Activated T-helper 1 cell treated with anti-CD3 and anti-CD28 coated beads, Interleukin-12 subunit alpha, Interleukin-12 subunit beta, Interleukin-2, Interleukin-4 antibody, amounts not matched to agents 30 ng/mL and 10 ng/mL and 1 ng/mL, durations not matched to agents 14 hours and 24 hours and 36 hours (primary cell): ENCODE measurements at regions of chr3 and their contacts with region 1.

Region 1: DNA sequence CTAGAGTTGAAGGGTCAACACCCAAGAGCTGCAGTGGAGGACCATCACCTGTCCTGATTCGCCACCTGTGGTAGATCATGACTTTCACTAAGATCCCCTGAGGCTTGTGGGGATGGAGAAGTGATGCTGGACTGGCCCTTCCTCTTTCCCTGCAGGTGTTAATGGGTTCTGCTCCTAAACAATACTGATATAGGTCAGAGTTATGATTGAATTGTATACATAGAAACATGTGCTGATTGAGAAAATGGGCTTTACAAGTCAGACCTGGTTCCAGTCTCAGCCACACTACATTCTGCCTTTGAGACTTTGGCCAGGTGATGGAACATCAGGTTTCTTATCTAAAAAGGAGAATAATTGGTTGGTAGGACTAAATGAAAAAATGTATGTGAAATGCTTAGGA is 418.9 kb upstream of the TPRG1 start:
- DNase-seq: no peak
- H3K4me3 Mint-ChIP-seq: no peak overlapping the region
- H3K27ac Mint-ChIP-seq: peak overlapping the region; percentile 60
- H3K4me1 Mint-ChIP-seq: peaks cover 33% of the 10 kb centered on the region
- H3K27me3 Mint-ChIP-seq: peaks cover 2% of the 10 kb centered on the region

Region 2: DNA sequence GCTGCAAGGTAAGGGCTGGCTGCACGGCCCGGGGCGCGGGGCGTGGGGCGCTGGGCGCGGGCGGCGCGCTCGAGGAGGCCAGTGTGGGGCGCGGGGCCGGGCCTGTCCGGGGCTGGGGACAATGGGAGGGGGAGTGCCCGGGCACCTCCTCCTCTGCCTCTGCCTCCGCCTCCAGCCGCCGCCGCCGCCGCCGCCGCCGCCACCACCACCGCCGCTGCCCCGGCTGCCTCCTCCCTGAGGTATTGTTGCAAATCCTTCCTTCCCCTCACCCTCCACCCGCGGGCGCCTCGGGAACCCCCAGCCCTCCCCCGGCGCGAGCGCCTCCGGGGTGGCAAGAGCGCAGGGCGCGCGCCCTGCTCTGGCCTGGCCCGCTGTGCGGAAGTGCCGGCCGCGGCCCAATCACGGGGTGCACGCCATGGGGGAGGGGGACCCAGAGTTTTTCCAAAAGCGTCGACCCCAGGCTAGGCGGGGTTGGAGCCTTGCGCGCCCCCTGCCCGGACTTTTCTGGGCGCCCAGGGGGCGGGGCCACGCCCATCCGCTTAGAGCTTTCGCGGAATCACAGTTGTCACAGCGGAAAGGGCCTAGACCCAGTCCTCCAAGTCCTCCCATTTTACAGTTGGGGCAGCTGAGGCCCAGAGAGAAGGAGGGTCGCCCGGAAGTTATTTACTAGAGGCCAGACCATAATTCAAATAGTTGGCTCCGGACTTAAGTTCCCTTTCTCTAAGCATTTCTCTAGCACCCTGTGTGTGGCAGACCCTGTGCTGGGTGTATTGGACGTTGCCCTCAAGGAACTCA is 598.6 kb before region 1 on chr3 and contains the start of gene LPP:
- intact Hi-C with region 1: loop called (anchors 2 kb)
- DNase-seq: peak; percentile 90
- H3K4me3 Mint-ChIP-seq: peak within 1 kb of the TSS; percentile 89
- H3K27ac Mint-ChIP-seq: peak within 1 kb of the TSS; percentile 87
- H3K4me1 Mint-ChIP-seq: peaks cover 71% of the 10 kb centered on the region
- H3K27me3 Mint-ChIP-seq: no peaks in the 10 kb centered on the region
- total RNA-seq, gene LPP: 38.2 and 46.4 TPM in 2 replicates

Region 3: GRCh38 chr3:188320757-188321156 is 432.1 kb before region 1 on chr3:
- intact Hi-C with region 1: loop called (anchors 1 kb)
- DNase-seq: no peak
- H3K4me3 Mint-ChIP-seq: no peak overlapping the region
- H3K27ac Mint-ChIP-seq: no peak overlapping the region
- H3K4me1 Mint-ChIP-seq: peaks cover 49% of the 10 kb centered on the region
- H3K27me3 Mint-ChIP-seq: peaks cover 1% of the 10 kb centered on the region

Region 4: GRCh38 chr3:188683032-188683521 is 69.8 kb before region 1 on chr3:
- intact Hi-C with region 1: loop called (anchors 1 kb)
- DNase-seq: no peak
- H3K4me3 Mint-ChIP-seq: no peak overlapping the region
- H3K27ac Mint-ChIP-seq: peak overlapping the region; percentile 74
- H3K4me1 Mint-ChIP-seq: peaks cover 28% of the 10 kb centered on the region
- H3K27me3 Mint-ChIP-seq: no peaks in the 10 kb centered on the region

Region 5: DNA sequence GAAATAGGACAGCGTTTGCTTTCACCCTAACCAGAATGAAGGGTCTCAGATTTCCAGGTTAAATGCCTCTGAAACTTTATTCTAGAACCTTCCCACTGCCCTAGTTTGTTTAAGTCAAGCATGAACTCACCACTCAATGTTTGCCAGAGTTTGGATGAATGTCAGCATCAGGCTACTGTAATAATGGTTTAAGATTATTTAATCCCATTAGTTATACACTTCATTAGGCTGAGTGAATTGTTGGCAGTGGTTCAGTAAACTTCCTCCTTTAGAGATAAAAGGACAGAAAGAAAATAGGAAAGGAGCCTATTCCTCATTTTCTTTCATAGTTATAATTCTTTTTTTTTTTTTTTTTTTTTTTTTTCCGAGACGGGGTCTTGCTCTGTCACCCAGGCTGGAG is 17.0 kb after region 1 on chr3:
- intact Hi-C with region 1: loop called (anchors 1 kb)
- DNase-seq: no peak
- H3K4me3 Mint-ChIP-seq: no peak overlapping the region
- H3K27ac Mint-ChIP-seq: no peak overlapping the region
- H3K4me1 Mint-ChIP-seq: no peaks in the 10 kb centered on the region
- H3K27me3 Mint-ChIP-seq: peaks cover 2% of the 10 kb centered on the region

Region 6: DNA sequence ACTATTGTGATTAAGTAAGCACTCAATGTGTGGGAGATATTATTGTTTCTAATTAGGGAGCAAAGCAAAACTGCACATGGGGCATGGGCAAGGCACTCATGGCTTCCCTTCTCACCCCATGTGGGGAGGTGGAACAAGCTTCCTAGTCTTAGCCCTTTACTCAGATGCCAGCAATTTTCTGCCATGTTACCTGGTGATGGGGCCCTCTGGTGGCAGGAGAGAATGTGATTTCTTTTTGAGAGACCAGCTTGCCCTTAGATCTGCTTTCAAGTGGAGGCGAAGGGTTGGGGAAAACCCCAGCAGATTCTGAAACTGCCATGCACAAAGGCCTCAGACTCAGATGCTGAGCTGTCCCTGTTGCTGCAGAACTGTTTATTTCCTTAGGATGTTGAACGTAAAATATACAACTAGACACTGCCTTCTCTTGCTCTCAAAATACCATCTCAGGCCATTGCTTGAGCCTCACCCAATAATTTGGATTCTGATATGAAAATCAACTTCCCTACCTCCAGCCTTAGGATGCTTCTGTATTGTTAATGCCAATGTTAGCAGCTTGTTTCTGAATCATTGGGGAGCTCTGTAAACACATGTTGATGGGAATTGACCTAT is 288.7 kb after region 1 on chr3:
- intact Hi-C with region 1: loop called (anchors 1 kb)
- DNase-seq: peak; percentile 75
- H3K4me3 Mint-ChIP-seq: no peak overlapping the region
- H3K27ac Mint-ChIP-seq: no peak overlapping the region
- H3K4me1 Mint-ChIP-seq: peaks cover 56% of the 10 kb centered on the region
- H3K27me3 Mint-ChIP-seq: peaks cover 4% of the 10 kb centered on the region

Region 7: GRCh38 chr3:189099031-189099471 is 346.2 kb after region 1 on chr3:
- intact Hi-C with region 1: no loop called
- DNase-seq: no peak
- H3K4me3 Mint-ChIP-seq: no peak overlapping the region
- H3K27ac Mint-ChIP-seq: no peak overlapping the region
- H3K4me1 Mint-ChIP-seq: no peaks in the 10 kb centered on the region
- H3K27me3 Mint-ChIP-seq: peaks cover 9% of the 10 kb centered on the region